CD4-positive, alpha-beta T cell (primary cell): ENCODE measurements at regions of chr20 and their contacts with region 1.

Region 1: DNA sequence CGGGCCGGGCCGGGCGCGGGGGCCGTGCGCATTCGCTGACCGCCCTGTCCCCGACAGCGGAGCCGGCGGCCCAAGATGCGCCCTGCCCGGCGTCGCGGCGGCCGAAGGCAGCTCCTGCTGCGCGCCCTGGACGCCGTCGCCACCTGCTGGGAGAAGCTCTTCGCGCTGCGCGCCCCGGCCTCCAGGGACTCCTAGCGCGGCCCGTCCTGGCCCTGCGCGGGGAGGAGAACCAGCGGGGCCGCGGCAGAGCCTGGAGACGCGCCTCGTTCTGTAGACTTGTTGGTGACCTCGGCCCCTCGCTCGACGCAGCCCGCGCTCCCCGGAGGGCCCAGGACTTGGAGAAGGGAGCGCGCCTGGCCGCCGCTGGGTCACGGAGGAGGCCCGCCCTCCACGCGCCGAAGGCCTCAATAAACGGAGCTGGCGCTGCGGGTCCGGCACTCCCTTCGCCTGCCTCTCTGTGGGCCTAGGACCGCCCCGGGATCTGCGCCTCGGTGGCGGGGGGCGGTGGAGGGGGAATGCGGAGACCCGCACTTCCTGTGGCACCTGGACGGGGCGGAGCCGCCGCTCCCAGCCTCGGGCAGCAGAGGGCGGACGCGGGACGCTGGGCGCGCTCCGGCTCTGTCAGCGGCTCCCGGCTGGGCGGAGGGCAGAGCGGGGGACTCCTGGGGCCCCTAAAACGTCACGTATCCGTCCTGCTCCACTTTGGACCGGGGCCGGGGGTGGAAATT is 2.7 kb downstream of the C20orf204 start:
- DNase-seq: peak; percentile 61 to 88 (median 78)
- ATAC-seq: peak; percentile 82
- H3K4me3 ChIP-seq: peak overlapping the region; percentile 49
- H3K4me3 Mint-ChIP-seq: peak overlapping the region; percentile 75
- H3K27ac ChIP-seq: peak overlapping the region in 1 of 2 donors; percentile 13
- H3K27ac Mint-ChIP-seq: no peak overlapping the region
- H3K4me1 ChIP-seq: peaks cover 85% of the 10 kb centered on the region
- H3K4me1 Mint-ChIP-seq: peaks cover 39% of the 10 kb centered on the region
- H3K27me3 ChIP-seq: peaks cover 0 to 4% of the 10 kb centered on the region in 2 experiments
- H3K27me3 Mint-ChIP-seq: no peaks in the 10 kb centered on the region
- CTCF ChIP-seq: peak; percentile 93

Region 2: DNA sequence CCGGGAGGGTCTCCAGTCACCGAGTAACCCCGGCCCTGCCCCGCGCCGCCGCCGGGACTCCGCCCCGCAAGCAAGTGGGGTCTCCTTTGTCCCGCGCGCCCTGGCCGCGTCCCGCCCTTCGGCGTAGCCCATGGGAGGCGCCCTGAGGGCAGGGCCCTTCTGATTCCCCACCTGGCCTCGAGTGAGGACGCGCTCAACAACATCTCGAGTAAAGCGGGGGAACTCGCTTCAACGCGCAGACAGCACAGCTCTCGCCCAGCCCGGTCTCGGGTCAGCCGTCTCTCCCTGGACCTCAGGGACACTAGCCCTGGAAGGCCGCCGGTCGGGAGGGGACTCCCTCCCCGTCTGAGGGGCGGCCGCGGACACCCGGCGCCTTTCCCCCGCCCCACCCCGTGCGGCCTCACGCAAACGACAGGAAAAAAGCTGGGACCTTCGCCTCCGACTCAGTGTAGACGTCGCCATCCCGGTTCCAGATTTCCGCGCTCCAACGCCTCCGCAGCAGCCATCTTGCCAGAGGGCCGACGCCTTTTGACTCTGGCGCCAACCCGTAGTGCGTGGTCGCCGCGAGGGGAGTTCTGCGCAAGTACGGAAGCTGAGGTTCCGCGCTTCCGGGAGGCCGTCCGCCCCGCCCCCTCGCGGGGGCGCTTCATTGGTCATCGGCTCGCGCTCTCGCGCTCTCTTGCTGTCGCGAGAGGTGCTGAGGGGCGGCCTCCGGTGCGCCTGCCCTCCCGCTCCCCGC is 1101.2 kb before region 1 on chr20:
- CTCF ChIA-PET with region 1: no interaction called
- POLR2A ChIA-PET with region 1: no interaction called
- intact Hi-C with region 1: no loop called
- DNase-seq: peak; percentile 94 to 98 (median 96)
- ATAC-seq: peak; percentile 88
- H3K4me3 ChIP-seq: peak overlapping the region; percentile 99
- H3K4me3 Mint-ChIP-seq: peak overlapping the region; percentile 96
- H3K27ac ChIP-seq: peak overlapping the region; percentile 84 to 87
- H3K27ac Mint-ChIP-seq: peak overlapping the region; percentile 92
- H3K4me1 ChIP-seq: peaks cover 64% of the 10 kb centered on the region
- H3K4me1 Mint-ChIP-seq: peaks cover 37% of the 10 kb centered on the region
- H3K27me3 ChIP-seq: no peaks in the 10 kb centered on the region
- H3K27me3 Mint-ChIP-seq: no peaks in the 10 kb centered on the region
- CTCF ChIP-seq: no peak

Region 3: DNA sequence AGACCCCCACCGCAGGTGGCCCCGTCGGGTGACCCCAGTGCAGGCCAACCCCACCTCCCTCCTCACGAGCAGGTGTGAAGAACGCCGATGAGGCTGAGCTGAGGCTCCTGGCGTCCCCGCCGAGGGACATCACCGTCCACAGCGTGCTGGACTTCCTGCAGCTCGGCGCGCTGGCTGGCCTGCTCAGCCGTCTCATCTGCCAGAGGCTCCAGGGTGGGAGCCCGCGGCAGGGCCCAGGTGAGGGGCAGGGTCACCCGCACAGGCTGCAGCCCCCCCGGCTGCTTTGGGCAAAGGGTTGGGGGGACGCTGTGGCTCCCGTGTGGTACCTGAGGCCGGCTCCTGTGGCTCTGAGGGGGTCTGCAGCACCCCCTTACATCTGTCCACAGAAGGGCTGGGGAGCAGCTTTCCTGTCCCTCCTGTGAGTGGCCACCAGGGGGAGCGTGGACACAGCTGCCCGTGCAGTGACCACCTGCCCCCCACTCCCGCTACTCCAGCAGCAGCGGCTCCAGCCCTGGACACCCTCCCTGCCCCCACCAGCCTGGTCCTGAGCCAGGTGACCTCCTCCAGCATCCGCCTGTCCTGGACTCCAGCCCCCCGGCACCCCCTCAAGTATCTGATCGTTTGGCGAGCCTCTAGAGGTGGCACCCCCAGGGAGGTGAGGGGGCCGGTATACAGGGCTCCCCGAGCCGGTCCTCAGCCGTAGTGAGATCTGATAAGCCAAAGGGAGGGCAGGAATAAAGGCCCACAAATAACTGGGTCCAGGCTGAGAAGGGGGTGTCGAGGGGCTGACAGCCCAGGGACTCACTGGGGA is 729.3 kb before region 1 on chr20:
- CTCF ChIA-PET with region 1: no interaction called
- POLR2A ChIA-PET with region 1: no interaction called
- intact Hi-C with region 1: no loop called
- DNase-seq: peak in 7 of 14 experiments; percentile 12 to 58 (median 20)
- ATAC-seq: peak; percentile 17
- H3K4me3 ChIP-seq: no peak overlapping the region
- H3K4me3 Mint-ChIP-seq: no peak overlapping the region
- H3K27ac ChIP-seq: no peak overlapping the region
- H3K27ac Mint-ChIP-seq: no peak overlapping the region
- H3K4me1 ChIP-seq: no peaks in the 10 kb centered on the region
- H3K4me1 Mint-ChIP-seq: no peaks in the 10 kb centered on the region
- H3K27me3 ChIP-seq: peaks cover 0 to 24% of the 10 kb centered on the region in 2 experiments
- H3K27me3 Mint-ChIP-seq: peaks cover 4% of the 10 kb centered on the region
- CTCF ChIP-seq: peak; percentile 56

Region 4: DNA sequence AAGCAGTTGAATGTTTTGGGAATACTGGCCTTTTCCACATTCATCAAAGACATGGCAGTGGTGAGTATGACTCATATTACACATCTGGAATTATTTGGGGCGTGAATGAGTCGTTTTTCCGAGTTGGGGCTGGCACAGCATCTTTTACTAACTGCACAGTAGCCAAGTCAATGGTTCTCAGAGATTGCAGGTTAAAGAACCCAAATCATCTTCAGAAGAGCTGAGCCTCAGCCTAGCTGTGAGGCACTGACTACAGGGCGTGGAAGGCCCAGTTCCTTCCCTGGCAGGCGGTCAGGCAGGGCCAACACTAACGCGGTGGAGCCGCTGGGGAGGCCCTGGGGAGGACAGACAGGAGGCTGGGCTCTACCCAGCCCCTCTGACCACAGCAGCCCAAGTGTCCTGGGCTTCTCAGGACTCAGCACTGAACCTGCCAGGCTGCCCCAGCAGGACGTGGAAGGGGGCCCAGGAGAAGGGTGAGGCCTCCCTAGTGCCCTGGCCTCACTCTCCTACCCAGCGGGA is 444.6 kb before region 1 on chr20:
- CTCF ChIA-PET with region 1: no interaction called
- POLR2A ChIA-PET with region 1: no interaction called
- intact Hi-C with region 1: no loop called
- DNase-seq: no peak
- ATAC-seq: no peak
- H3K4me3 ChIP-seq: no peak overlapping the region
- H3K4me3 Mint-ChIP-seq: no peak overlapping the region
- H3K27ac ChIP-seq: no peak overlapping the region
- H3K27ac Mint-ChIP-seq: no peak overlapping the region
- H3K4me1 ChIP-seq: no peaks in the 10 kb centered on the region
- H3K4me1 Mint-ChIP-seq: no peaks in the 10 kb centered on the region
- H3K27me3 ChIP-seq: no peaks in the 10 kb centered on the region
- H3K27me3 Mint-ChIP-seq: no peaks in the 10 kb centered on the region
- CTCF ChIP-seq: no peak

Region 5: GRCh38 chr20:63980806-63981728 is 57.7 kb before region 1 on chr20 and contains the start of gene PRPF6:
- CTCF ChIA-PET with region 1: interaction called, 40 read pairs
- POLR2A ChIA-PET with region 1: interaction called, 36 read pairs
- intact Hi-C with region 1: loop called (anchors 2 to 10 kb)
- DNase-seq: peak; percentile 89 to 98 (median 94)
- ATAC-seq: peak; percentile 58
- H3K4me3 ChIP-seq: peak within 1 kb of the TSS; percentile 69
- H3K4me3 Mint-ChIP-seq: peak within 1 kb of the TSS; percentile 90
- H3K27ac ChIP-seq: peak within 1 kb of the TSS; percentile 85 to 87
- H3K27ac Mint-ChIP-seq: peak within 1 kb of the TSS; percentile 98
- H3K4me1 ChIP-seq: peaks cover 60% of the 10 kb centered on the region
- H3K4me1 Mint-ChIP-seq: peaks cover 67% of the 10 kb centered on the region
- H3K27me3 ChIP-seq: no peaks in the 10 kb centered on the region
- H3K27me3 Mint-ChIP-seq: no peaks in the 10 kb centered on the region
- CTCF ChIP-seq: peak; percentile 93
- total RNA-seq, gene PRPF6: 50.6 to 51.3 TPM

Region 6: GRCh38 chr20:64003960-64004725 is 34.6 kb before region 1 on chr20:
- CTCF ChIA-PET with region 1: interaction called, 13 read pairs
- POLR2A ChIA-PET with region 1: interaction called, 8 read pairs
- intact Hi-C with region 1: no loop called
- DNase-seq: no peak
- ATAC-seq: no peak
- H3K4me3 ChIP-seq: no peak overlapping the region
- H3K4me3 Mint-ChIP-seq: no peak overlapping the region
- H3K27ac ChIP-seq: no peak overlapping the region
- H3K27ac Mint-ChIP-seq: no peak overlapping the region
- H3K4me1 ChIP-seq: no peaks in the 10 kb centered on the region
- H3K4me1 Mint-ChIP-seq: peaks cover 18% of the 10 kb centered on the region
- H3K27me3 ChIP-seq: no peaks in the 10 kb centered on the region
- H3K27me3 Mint-ChIP-seq: no peaks in the 10 kb centered on the region
- CTCF ChIP-seq: no peak

Region 7: DNA sequence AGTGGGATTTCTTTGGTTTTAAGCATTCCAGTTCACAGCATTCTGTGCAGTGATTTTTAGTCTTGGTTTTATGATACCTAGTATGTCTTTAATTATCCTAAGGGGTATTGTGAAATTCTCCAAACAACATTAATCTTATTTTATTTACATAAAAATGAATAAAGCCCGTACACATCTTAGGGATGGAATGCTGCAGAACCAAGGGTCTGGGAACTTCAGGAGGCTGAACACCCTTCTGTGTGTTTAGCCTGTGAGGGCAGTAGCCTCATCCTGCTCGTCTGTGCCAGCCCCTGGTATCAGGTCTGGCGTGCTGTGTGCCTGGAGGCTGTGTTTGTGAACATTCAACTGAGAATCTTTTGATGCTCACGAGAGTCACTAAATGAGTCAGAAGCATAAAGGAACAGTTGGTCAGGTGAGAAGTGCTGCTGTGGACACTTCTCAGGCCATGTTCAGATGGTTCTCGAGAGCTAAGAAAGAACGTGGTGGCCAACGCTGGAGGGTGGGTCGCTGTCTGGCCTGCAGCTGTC is 28.0 kb before region 1 on chr20:
- CTCF ChIA-PET with region 1: interaction called, 13 read pairs
- POLR2A ChIA-PET with region 1: interaction called, 8 read pairs
- intact Hi-C with region 1: no loop called
- DNase-seq: no peak
- ATAC-seq: no peak
- H3K4me3 ChIP-seq: no peak overlapping the region
- H3K4me3 Mint-ChIP-seq: no peak overlapping the region
- H3K27ac ChIP-seq: no peak overlapping the region
- H3K27ac Mint-ChIP-seq: peak overlapping the region; percentile 61
- H3K4me1 ChIP-seq: peaks cover 36% of the 10 kb centered on the region
- H3K4me1 Mint-ChIP-seq: peaks cover 25% of the 10 kb centered on the region
- H3K27me3 ChIP-seq: no peaks in the 10 kb centered on the region
- H3K27me3 Mint-ChIP-seq: no peaks in the 10 kb centered on the region
- CTCF ChIP-seq: no peak

Region 8: GRCh38 chr20:64069614-64070243 is 31.0 kb after region 1 on chr20:
- CTCF ChIA-PET with region 1: interaction called, 10 read pairs
- POLR2A ChIA-PET with region 1: interaction called, 3 read pairs
- intact Hi-C with region 1: no loop called
- DNase-seq: peak in 3 of 14 experiments; percentile 30 to 52 (median 47)
- ATAC-seq: no peak
- H3K4me3 ChIP-seq: no peak overlapping the region
- H3K4me3 Mint-ChIP-seq: no peak overlapping the region
- H3K27ac ChIP-seq: no peak overlapping the region
- H3K27ac Mint-ChIP-seq: no peak overlapping the region
- H3K4me1 ChIP-seq: peaks cover 62% of the 10 kb centered on the region
- H3K4me1 Mint-ChIP-seq: peaks cover 28% of the 10 kb centered on the region
- H3K27me3 ChIP-seq: no peaks in the 10 kb centered on the region
- H3K27me3 Mint-ChIP-seq: no peaks in the 10 kb centered on the region
- CTCF ChIP-seq: peak; percentile 76

Region 9: GRCh38 chr20:64079273-64080012 is 40.7 kb after region 1 on chr20 and contains the start of gene RGS19:
- CTCF ChIA-PET with region 1: interaction called, 12 read pairs
- POLR2A ChIA-PET with region 1: interaction called, 30 read pairs
- intact Hi-C with region 1: loop called (anchors 2 to 5 kb)
- DNase-seq: peak in 13 of 14 experiments; percentile 42 to 87 (median 68)
- ATAC-seq: peak; percentile 33
- H3K4me3 ChIP-seq: peak within 1 kb of the TSS; percentile 93
- H3K4me3 Mint-ChIP-seq: peak within 1 kb of the TSS; percentile 91
- H3K27ac ChIP-seq: peak within 1 kb of the TSS; percentile 61 to 80
- H3K27ac Mint-ChIP-seq: peak within 1 kb of the TSS; percentile 86
- H3K4me1 ChIP-seq: peaks cover 63% of the 10 kb centered on the region
- H3K4me1 Mint-ChIP-seq: peaks cover 46% of the 10 kb centered on the region
- H3K27me3 ChIP-seq: no peaks in the 10 kb centered on the region
- H3K27me3 Mint-ChIP-seq: no peaks in the 10 kb centered on the region
- CTCF ChIP-seq: no peak
- total RNA-seq, gene RGS19: 9.7 to 14.8 TPM

Region 10: DNA sequence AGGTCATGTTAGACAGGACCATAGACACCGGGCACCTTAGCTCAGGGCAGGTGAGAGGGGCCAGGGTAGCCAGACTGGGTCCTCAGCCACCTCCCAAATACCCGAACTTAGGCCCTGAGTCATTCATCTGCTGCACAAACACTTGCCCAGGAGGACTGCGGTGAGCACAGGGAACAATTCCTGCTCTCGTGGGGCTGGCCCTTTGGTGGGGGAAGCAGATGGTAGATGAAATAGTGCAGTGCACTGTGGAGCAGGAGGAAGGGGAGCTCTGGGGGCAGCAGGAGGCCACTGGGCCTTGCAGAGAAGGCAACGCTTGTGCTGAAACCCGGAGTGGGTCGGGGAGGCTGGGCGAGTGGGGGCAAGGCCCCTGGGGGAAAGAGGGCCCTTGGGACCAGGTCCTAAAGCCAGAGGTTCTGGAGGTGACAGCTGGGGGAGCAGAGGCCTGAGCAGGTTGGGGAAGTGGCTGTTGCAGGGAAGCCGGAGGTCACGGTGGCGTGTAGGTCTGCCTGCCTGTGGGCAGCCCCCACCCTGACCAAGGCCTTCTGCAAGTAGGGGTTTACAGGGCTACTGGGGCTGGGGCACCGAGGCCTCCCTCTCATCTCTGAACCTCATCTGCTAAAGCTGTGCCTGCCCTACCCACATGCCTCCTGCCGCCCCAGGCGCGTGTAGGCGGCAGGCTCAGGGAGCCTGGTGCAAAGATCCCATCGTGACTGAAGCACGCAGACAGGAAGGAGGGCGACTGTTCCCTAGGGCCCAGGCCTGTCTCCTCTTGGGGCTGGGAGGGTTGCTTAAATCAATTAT is 73.3 kb after region 1 on chr20:
- CTCF ChIA-PET with region 1: no interaction called
- POLR2A ChIA-PET with region 1: no interaction called
- intact Hi-C with region 1: no loop called
- DNase-seq: peak in 1 of 14 experiments; percentile 20
- ATAC-seq: no peak
- H3K4me3 ChIP-seq: no peak overlapping the region
- H3K4me3 Mint-ChIP-seq: no peak overlapping the region
- H3K27ac ChIP-seq: no peak overlapping the region
- H3K27ac Mint-ChIP-seq: no peak overlapping the region
- H3K4me1 ChIP-seq: no peaks in the 10 kb centered on the region
- H3K4me1 Mint-ChIP-seq: no peaks in the 10 kb centered on the region
- H3K27me3 ChIP-seq: no peaks in the 10 kb centered on the region
- H3K27me3 Mint-ChIP-seq: no peaks in the 10 kb centered on the region
- CTCF ChIP-seq: no peak